ENCODE measurements at regions of chr11 and their contacts with region 1.

Region 1: DNA sequence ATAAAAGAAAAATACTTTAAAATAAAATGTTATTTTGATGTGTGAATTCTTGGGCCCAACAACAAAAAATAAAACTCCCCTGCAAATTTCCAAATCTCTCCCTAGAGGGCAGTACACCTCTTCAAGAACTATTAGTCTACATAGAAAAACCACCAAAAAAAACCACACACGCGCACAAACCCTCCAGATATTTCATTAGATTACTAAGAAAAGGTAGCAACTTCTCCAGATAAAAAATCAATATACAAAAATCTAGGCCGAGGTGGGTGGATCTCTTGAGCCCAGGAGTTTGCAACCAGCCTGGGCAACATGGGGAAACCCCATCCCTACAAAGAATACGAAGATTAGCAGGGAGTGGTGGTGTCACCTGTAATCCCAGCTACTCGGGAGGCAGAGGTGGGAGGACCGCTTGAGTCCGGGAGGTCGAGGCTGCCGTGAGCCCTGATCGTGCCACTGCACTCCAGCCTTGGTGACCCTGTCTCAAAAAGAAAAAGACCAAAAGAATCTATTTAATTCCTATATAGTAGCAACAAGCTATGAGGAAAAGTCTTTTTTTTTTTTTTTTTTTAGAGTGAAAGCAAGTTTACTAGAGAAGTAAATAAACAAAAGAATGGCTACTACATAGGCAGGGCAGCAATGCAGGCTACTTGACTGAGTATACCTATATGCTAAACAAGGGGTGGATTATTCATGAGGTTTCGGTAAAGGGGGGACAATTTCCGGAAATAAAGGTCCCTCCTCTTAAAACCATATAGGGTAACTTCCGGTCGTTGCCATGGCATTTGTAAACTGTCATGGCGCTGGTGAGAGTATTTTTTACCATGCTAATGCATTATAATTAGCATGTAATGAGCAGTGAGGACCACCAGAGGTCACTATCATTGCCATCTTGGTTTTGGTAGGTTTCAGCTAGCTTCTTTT is 13.1 kb downstream of the B3GNT6 start:
- DNase-seq: peak; percentile 99
- ATAC-seq: peak; percentile 82
- H3K4me3 ChIP-seq: peak overlapping the region; percentile 71
- H3K27ac ChIP-seq: no peak overlapping the region
- H3K4me1 ChIP-seq: peaks cover 16% of the 10 kb centered on the region; the same call in 1 of the 2 replicates
- H3K27me3 ChIP-seq: no peaks in the 10 kb centered on the region
- CTCF ChIP-seq: peak; percentile 76

Region 2: DNA sequence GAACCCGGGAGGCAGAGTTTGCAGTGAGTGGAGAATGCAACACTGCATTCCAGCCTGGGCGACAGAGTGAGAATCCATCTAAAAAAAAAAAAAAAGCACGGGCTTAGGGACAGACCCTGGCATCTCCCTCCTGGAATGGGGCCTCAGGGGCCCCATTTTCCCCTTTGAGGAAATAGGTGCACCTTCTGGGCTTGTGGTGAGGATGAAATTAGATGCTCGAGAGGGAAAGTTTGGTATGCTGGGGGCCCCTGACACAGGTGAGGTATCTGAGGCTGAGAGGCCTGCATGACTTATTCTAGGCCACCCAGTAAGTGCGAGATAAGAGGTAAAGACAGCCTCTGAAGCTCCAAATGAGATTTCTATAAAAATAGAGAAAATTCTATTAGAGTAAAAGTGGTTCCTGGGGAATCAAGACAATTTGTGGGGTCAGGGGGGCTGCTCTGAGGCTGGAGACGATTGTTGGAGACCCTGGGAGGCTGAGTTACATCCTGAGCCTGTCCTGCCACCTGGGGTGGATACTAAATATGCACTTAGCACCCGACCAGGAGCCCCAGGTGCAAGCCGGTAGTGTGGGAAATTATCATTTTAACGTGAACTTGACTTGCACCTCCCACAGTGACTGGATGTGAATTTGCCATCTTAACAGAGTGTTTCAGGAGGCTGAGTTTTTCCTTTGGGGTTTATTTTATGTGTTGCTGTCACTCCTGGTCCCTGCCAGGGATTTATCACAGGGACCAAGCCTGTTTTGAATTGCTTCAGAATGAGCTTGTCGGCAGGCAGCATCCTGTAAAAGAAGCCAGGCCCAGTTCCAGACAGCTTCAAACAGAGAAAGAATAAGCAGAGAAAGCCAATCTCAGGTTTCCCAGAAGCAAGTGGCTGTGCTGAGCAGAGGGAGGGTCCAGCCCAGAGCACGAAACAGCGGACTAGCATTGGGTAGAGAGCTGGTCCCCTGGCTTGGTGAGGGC is 312.5 kb before region 1 on chr11:
- CTCF ChIA-PET with region 1: interaction called, 5 read pairs
- POLR2A ChIA-PET with region 1: no interaction called
- intact Hi-C with region 1: loop called (anchors 2 kb)
- DNase-seq: no peak
- ATAC-seq: no peak
- H3K4me3 ChIP-seq: no peak overlapping the region
- H3K27ac ChIP-seq: no peak overlapping the region
- H3K4me1 ChIP-seq: no peaks in the 10 kb centered on the region
- H3K27me3 ChIP-seq: no peaks in the 10 kb centered on the region
- CTCF ChIP-seq: no peak

Region 3: GRCh38 chr11:76978818-76979217 is 68.4 kb before region 1 on chr11:
- CTCF ChIA-PET with region 1: no interaction called
- POLR2A ChIA-PET with region 1: no interaction called
- intact Hi-C with region 1: loop called (anchors 1 kb)
- DNase-seq: no peak
- ATAC-seq: no peak
- H3K4me3 ChIP-seq: no peak overlapping the region
- H3K27ac ChIP-seq: no peak overlapping the region
- H3K4me1 ChIP-seq: no peaks in the 10 kb centered on the region; the same call in 1 of the 2 replicates
- H3K27me3 ChIP-seq: no peaks in the 10 kb centered on the region
- CTCF ChIP-seq: no peak

Region 4: DNA sequence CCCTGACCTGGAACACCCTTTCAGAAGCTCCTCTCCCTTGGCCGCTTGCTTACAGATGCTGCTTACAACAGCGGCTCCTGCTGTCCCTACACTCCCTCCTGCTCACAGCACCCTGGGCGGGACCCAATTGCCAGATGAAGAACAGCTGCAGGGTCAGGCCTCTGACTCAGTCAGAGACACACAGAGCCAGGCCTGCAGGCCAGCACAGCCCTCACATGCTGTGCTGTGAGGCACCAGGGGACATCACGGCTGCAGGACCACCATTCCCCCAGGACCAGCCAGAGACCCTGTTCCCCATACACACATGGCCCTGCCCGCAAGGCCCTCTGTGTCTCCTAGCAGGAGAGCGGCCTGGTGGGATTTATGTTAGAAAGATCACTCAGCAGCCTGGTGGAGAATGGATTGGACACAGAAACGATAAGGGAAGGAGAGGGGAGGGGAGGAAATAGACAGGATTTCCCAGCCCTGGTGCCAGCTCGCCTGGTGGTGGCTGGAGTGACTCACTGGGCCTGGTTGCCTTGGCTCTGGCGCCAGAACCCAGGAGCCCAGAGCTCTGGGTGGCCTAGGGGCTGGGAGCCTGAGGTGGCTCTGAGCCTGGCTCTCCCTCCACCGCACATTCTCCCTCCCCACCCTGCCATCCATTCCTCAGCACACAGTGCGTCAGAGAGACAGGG is 26.2 kb after region 1 on chr11:
- CTCF ChIA-PET with region 1: interaction called, 19 read pairs
- POLR2A ChIA-PET with region 1: no interaction called
- intact Hi-C with region 1: loop called (anchors 1 kb)
- DNase-seq: peak; percentile 75
- ATAC-seq: peak; percentile 92
- H3K4me3 ChIP-seq: no peak overlapping the region
- H3K27ac ChIP-seq: peak overlapping the region; percentile 51
- H3K4me1 ChIP-seq: peaks cover 29% of the 10 kb centered on the region
- H3K27me3 ChIP-seq: no peaks in the 10 kb centered on the region
- CTCF ChIP-seq: peak; percentile 39; the same call in 1 of the 2 replicates

Region 5: DNA sequence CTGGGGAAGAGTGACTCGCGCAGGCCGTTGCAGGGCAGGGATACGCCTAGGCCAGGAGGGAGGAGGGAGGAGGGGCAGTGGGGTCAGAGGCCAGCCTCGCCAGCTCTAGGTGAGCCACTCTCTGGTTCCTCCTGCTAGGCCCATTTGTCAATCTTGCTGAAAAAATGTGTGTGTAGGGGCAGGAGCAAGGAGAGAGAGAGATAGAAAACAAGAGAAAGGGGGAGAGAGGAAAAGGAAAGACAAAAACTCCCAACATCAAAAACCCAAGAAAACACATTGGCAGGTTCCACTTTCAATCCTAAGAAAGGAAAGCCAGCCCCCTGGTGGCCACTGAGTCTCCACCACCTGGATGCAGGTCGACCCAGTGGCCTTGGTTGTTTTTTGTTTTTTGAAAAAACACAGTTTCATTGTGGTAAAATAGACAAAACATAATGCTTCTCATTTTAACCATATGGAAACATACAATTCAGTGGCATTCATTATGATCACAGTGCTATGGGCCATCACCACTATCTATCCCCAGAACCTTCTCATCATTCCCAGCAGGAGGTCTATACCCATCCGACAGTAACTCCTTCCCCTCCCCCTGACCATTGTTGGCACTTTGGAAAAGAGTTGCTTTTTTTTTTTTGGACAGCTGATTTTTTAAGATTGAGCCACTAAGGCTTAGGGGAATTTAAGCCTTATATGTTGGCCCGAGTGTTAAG is 66.3 kb after region 1 on chr11:
- CTCF ChIA-PET with region 1: interaction called, 4 read pairs
- POLR2A ChIA-PET with region 1: no interaction called
- intact Hi-C with region 1: loop called (anchors 1 kb)
- DNase-seq: peak; percentile 67
- ATAC-seq: peak; percentile 45
- H3K4me3 ChIP-seq: no peak overlapping the region
- H3K27ac ChIP-seq: no peak overlapping the region
- H3K4me1 ChIP-seq: peaks cover 33% of the 10 kb centered on the region
- H3K27me3 ChIP-seq: no peaks in the 10 kb centered on the region
- CTCF ChIP-seq: peak; percentile 88

Measured in PC-3 (cell line).